Esophagus muscularis mucosa (tissue), 4 donors: ENCODE measurements at regions of chr4 and their contacts with region 1.

Region 1: DNA sequence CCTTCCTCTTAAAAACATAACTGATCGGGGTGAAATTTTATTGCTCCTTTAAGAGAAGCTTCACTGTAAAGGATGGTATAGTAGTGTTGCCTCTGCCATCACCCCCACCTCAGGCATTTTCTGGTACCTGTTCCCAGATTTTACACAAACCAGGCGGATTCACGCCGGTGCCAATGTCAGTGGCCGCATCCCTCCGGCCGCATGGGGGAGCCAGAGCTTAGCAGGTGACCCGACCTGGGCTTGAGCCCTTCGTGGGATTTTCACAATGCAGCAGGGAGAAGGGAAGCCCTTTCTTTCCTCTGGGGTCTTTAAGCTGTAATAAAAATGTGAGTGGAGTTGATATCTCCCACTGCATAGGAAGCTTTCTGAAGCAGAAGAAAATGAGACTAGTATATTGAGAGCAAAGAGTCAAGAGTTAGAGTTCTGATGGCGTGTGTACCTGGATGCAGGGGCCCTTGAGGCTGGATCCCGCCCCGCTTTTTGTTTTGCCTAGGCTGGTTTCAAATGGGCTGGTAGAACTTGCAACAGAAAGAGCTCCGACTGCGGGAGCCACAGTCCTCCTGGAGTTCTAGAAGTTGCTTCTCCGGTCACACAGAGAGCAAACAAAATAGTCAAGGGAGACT is 59.4 kb downstream of the POLR2B start:
- DNase-seq: no peak
- H3K4me3 ChIP-seq: no peak overlapping the region
- H3K27ac ChIP-seq: peak overlapping the region in 2 of 4 donors; percentile 13 to 21
- H3K4me1 ChIP-seq: peaks cover 15 to 44% (median 34%) of the 10 kb centered on the region in 4 donors
- H3K27me3 ChIP-seq: no peaks in the 10 kb centered on the region
- CTCF ChIP-seq: peak; percentile 80 to 93 (median 84)
- EP300 ChIP-seq: no peak
- POLR2A ChIP-seq: no peak

Region 2: DNA sequence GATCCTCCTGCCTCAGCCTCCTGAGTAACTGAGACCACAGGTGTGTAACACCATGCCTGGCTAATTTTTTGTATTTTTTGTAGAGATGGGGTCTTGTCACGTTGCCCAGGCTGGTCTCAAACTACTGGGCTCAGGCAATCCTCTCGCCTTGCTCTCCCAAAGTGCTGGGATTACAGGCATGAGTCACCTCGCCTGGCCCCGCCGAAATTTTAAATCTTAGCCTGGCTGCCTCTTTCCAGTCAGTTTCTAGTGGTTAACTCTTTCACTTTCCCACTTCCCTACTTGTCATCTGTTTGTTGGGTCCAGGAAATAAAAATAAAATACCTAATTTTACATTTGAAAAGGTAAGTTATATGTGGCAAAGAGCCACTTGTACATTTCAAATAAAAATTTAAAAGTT is 1579.9 kb before region 1 on chr4:
- intact Hi-C with region 1: no loop called
- DNase-seq: no peak
- H3K4me3 ChIP-seq: no peak overlapping the region
- H3K27ac ChIP-seq: no peak overlapping the region
- H3K4me1 ChIP-seq: no peaks in the 10 kb centered on the region
- H3K27me3 ChIP-seq: no peaks in the 10 kb centered on the region
- CTCF ChIP-seq: no peak
- EP300 ChIP-seq: no peak
- POLR2A ChIP-seq: no peak

Region 3: DNA sequence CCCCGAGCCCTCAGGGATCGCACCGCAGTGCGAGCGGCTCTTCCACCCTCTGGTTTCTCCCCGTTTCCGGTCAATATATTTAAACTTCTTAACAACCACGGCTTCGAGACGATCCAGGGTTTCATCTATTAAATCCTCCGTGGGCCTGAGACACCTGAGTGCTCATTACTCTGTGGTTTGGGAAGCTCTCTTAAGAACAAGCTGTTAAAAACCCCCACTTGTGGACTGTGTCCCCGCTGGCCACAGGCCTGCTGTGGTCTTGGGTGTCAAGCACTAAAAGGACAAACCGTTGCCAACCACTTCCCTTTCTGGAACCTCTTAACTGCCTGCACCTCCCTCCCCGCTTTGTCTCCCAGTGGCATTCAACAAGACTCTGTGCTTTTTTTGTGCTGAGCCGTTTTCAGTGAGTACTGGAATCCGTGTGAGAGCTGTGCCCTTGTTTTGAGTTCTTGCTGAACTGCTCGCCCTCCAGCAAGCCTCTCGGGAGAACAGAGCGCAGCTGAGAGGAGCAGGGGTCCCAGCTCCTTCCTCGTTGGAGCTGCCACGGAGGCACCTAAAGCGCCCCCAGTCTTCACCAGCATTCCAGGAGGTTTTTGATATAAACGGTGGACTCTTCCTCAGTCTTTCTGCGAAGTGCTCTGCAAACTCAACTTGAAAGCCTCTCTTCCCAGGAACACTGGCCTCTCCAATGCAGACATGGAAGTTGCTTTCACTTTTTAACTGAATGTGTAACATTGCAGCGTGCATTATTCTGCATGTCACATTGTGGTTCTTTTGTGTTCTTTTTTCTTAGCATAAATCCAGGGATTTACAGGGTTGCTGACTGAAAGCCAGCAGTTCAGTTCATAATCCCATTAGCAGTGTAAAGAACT is 72.8 kb after region 1 on chr4:
- intact Hi-C with region 1: loop called (anchors 5 kb)
- DNase-seq: peak; percentile 93
- H3K4me3 ChIP-seq: peak overlapping the region; percentile 84 to 97 (median 92)
- H3K27ac ChIP-seq: peak overlapping the region; percentile 93 to 98 (median 98)
- H3K4me1 ChIP-seq: peaks cover 23 to 72% (median 52%) of the 10 kb centered on the region in 4 donors
- H3K27me3 ChIP-seq: no peaks in the 10 kb centered on the region
- CTCF ChIP-seq: no peak
- EP300 ChIP-seq: no peak
- POLR2A ChIP-seq: no peak

Region 4: DNA sequence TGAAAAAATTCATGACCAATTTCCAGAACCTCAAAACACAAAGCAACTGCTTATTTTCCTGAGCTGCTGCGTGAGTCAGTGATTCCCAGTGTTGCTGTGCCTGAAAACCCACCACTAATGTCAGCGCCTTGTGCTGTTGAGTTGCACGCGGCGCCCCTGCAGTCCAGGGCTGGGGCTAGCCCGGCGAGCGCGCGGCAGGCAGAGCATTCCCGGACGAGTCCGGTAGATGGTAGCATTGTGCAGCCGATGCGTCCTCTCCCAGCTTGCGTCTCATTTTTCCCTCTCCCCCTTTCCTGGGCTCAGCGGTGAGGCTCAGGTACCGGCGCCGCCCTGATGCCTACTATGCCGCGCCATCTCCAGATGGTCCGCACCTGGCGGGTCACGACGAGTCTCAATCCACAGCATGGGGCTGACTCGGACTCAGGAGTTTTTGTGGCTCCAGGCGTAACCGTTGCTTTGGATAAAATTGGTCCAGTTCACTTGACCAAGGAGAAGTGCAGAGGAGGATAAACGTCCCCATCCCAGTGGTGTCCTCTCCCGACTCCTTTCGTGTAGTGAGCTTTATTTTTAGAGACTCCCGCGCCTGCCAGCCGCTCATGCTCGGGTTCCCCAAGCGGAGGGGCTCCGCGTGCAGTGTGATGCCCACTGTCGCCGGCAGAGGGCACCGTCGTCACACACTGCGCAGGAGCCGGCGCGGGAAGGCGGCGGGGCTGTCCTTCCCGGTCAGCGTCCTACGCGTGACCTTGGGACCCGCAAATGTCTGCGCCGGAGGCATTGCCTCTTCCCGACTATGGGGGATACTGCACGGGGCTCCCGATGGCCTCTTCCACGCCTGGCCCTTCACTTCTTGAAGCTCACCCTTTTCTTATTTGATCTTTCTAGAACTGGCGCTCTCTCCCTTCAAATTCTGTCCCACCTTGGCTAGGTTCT is 125.7 kb after region 1 on chr4:
- intact Hi-C with region 1: loop called (anchors 1 kb)
- DNase-seq: peak; percentile 94
- H3K4me3 ChIP-seq: peak overlapping the region; percentile 62 to 78 (median 66)
- H3K27ac ChIP-seq: peak overlapping the region; percentile 71 to 82 (median 78)
- H3K4me1 ChIP-seq: peaks cover 8 to 14% (median 12%) of the 10 kb centered on the region in 4 donors
- H3K27me3 ChIP-seq: no peaks in the 10 kb centered on the region
- CTCF ChIP-seq: peak; percentile 74 to 90 (median 87)
- EP300 ChIP-seq: no peak
- POLR2A ChIP-seq: no peak